Heart left ventricle (tissue), 16 donors: ENCODE measurements at regions of chr1 and their contacts with region 1.

Region 1: GRCh38 chr1:93722081-93723031 is 40.7 kb upstream of the BCAR3 start:
- DNase-seq: peak; percentile 69 to 88 (median 79)
- ATAC-seq: peak; percentile 85 to 90 (median 88)
- H3K4me3 ChIP-seq: no peak overlapping the region
- H3K27ac ChIP-seq: peak overlapping the region; percentile 54 to 95 (median 82)
- H3K4me1 ChIP-seq: peaks cover 5 to 46% (median 37%) of the 10 kb centered on the region in 12 donors
- H3K27me3 ChIP-seq: no peaks in the 10 kb centered on the region
- CTCF ChIP-seq: peak in 10 of 12 donors; percentile 8 to 49 (median 31)
- POLR2A ChIP-seq: no peak

Region 2: DNA sequence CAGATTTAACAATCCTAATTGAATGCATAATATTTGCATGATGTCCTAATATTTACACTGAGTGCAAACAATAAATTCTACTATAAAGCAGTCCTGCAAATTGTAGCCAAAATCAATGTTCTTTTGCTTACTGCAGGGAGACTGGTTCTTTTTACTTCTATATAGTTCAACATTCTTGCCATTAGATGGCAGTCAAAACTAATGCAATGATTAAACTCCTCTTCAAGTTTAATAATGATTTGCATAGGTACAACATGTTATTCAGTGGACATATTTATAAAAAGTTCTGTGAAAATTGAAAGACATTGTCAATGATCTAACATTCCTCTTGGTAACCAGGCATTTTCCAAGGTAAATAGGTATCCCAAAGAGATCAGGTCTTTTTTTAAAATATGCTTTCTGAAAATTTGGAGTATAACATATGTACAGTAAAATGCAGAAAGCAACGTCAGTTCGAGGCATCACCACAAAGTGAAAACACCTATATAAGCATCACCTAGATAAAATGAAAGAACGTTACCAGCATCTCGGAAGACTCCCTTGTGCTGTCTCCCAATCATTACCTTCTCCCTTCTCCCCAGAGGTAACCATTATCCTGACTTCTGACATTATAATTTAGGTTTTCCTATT is 284.3 kb before region 1 on chr1:
- intact Hi-C with region 1: loop called in 1 of 10 experiments (anchors 10 kb)
- DNase-seq: no peak
- ATAC-seq: peak; percentile 42 to 71 (median 46)
- H3K4me3 ChIP-seq: no peak overlapping the region
- H3K27ac ChIP-seq: no peak overlapping the region
- H3K4me1 ChIP-seq: peaks cover 0 to 7% (median 0%) of the 10 kb centered on the region in 12 donors
- H3K27me3 ChIP-seq: no peaks in the 10 kb centered on the region
- CTCF ChIP-seq: peak; percentile 63 to 82 (median 72)
- POLR2A ChIP-seq: no peak

Region 3: GRCh38 chr1:93672069-93672468 is 50.3 kb before region 1 on chr1:
- intact Hi-C with region 1: loop called in 1 of 10 experiments (anchors 5 kb)
- DNase-seq: peak; percentile 72 to 91 (median 85)
- ATAC-seq: peak; percentile 49 to 75 (median 56)
- H3K4me3 ChIP-seq: no peak overlapping the region
- H3K27ac ChIP-seq: peak overlapping the region in 11 of 12 donors; percentile 12 to 77 (median 57)
- H3K4me1 ChIP-seq: peaks cover 17 to 98% (median 89%) of the 10 kb centered on the region in 12 donors
- H3K27me3 ChIP-seq: no peaks in the 10 kb centered on the region
- CTCF ChIP-seq: no peak
- POLR2A ChIP-seq: no peak

Region 4: GRCh38 chr1:93680757-93681550 is 41.4 kb before region 1 on chr1:
- intact Hi-C with region 1: loop called in 5 of 10 experiments (anchors 2 to 5 kb)
- DNase-seq: peak; percentile 80 to 91 (median 85)
- ATAC-seq: peak; percentile 89 to 91 (median 90)
- H3K4me3 ChIP-seq: peak overlapping the region; percentile 74 to 96 (median 90)
- H3K27ac ChIP-seq: peak overlapping the region; percentile 84 to 94 (median 92)
- H3K4me1 ChIP-seq: peaks cover 0 to 53% (median 32%) of the 10 kb centered on the region in 12 donors
- H3K27me3 ChIP-seq: no peaks in the 10 kb centered on the region
- CTCF ChIP-seq: peak; percentile 40 to 73 (median 58)
- POLR2A ChIP-seq: peak in 1 of 2 donors; percentile 41

Region 5: GRCh38 chr1:93758842-93759515 is 36.6 kb after region 1 on chr1:
- intact Hi-C with region 1: loop called in 1 of 10 experiments (anchors 5 kb)
- DNase-seq: peak in 1 of 5 donors; percentile 51
- ATAC-seq: peak in 3 of 4 donors; percentile 9 to 53 (median 47)
- H3K4me3 ChIP-seq: no peak overlapping the region
- H3K27ac ChIP-seq: no peak overlapping the region
- H3K4me1 ChIP-seq: peaks cover 0 to 18% (median 0%) of the 10 kb centered on the region in 12 donors
- H3K27me3 ChIP-seq: no peaks in the 10 kb centered on the region
- CTCF ChIP-seq: no peak
- POLR2A ChIP-seq: no peak

Region 6: GRCh38 chr1:93804412-93804811 is 82.1 kb after region 1 on chr1:
- intact Hi-C with region 1: loop called in 1 of 10 experiments (anchors 5 kb)
- DNase-seq: peak in 2 of 5 donors; percentile 41 to 47
- ATAC-seq: peak; percentile 76 to 97 (median 95)
- H3K4me3 ChIP-seq: peak overlapping the region in 2 of 12 donors; percentile 3 to 10
- H3K27ac ChIP-seq: peak overlapping the region in 10 of 12 donors; percentile 9 to 67 (median 41)
- H3K4me1 ChIP-seq: peaks cover 0 to 23% (median 12%) of the 10 kb centered on the region in 12 donors
- H3K27me3 ChIP-seq: no peaks in the 10 kb centered on the region
- CTCF ChIP-seq: no peak
- POLR2A ChIP-seq: no peak

Region 7: GRCh38 chr1:93814059-93814794 is 91.9 kb after region 1 on chr1:
- intact Hi-C with region 1: loop called in 4 of 10 experiments (anchors 5 kb)
- DNase-seq: peak in 4 of 5 donors; percentile 51 to 70 (median 59)
- ATAC-seq: peak; percentile 65 to 84 (median 77)
- H3K4me3 ChIP-seq: no peak overlapping the region
- H3K27ac ChIP-seq: no peak overlapping the region
- H3K4me1 ChIP-seq: peaks cover 0 to 57% (median 31%) of the 10 kb centered on the region in 12 donors
- H3K27me3 ChIP-seq: no peaks in the 10 kb centered on the region
- CTCF ChIP-seq: peak; percentile 94 to 100 (median 97)
- POLR2A ChIP-seq: no peak

Region 8: DNA sequence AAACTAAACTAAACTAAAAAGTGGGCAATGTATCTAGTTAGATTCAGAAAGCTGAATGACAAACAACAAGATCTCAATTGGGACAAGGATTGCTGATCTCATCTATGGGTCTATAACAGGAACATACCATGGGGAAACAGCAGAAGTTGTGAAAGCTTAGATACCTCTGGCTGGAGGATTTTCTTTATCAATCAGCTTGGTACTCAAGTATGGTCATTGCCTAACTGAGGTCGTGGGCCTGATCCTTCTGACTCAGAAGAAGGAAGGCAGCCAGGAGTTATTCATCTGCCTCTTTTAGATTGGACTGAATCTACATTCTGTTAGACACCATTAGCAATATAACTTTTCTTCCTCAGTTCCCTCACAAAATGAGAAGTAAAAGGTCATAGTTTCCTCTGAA is 117.0 kb after region 1 on chr1:
- intact Hi-C with region 1: no loop called
- DNase-seq: no peak
- ATAC-seq: peak in 1 of 4 donors; percentile 38
- H3K4me3 ChIP-seq: no peak overlapping the region
- H3K27ac ChIP-seq: no peak overlapping the region
- H3K4me1 ChIP-seq: peaks cover 0 to 14% (median under 1%) of the 10 kb centered on the region in 12 donors
- H3K27me3 ChIP-seq: no peaks in the 10 kb centered on the region
- CTCF ChIP-seq: no peak
- POLR2A ChIP-seq: no peak